A549 (cell line): ENCODE measurements at regions of chr3 and their contacts with region 1.

Region 1: DNA sequence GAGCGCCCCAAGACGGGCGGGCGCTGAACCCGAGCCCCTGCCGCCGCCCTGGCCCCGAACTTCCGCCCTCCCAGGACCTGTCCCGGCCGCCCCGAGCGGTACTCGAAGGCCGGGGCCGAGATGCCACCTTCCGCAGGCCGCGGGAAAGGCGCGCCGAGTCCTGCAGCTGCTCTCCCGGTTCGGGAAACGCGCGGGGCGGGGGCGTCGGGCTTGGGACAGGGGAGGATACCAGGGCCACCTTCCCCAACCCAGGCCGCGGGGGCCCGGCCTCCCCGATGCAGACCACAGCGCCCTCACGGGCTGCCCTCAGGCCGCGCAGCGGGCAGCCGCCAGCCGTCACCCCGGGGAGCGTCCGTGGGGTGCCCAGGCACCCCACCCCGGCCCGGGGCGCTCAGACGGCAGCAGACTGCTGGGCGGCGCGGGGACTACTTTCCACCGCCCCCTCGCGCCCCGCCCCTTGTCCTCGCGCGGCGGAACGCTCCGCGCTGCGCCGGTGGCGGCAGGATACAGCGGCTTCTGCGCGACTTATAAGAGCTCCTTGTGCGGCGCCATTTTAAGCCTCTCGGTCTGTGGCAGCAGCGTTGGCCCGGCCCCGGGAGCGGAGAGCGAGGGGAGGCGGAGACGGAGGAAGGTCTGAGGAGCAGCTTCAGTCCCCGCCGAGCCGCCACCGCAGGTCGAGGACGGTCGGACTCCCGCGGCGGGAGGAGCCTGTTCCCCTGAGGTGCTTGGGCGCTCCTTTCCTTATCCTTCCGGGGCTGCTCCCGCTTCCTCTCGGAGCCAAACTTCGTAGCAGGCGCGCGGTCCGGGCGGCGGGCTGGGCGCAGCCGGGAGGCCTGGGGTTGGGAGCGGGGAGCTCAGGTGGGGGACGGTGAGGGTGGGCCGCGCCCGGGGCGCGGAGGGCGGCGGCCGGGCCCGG is at the start of gene CTNNB1:
- DNase-seq: peak; percentile 33 to 94
- ATAC-seq: peak; percentile 81 to 89
- H3K4me3 ChIP-seq: peak within 1 kb of the TSS; percentile 95
- H3K27ac ChIP-seq: peak within 1 kb of the TSS; percentile 98 to 100
- H3K4me1 ChIP-seq: peaks cover 26% of the 10 kb centered on the region
- CTCF ChIP-seq: no peak
- EP300 ChIP-seq: peak in 1 of 2 experiments; percentile 6; a peak in 1 of 5 replicates
- POLR2A ChIP-seq: peak; percentile 84
- RAD21 ChIP-seq: peak; percentile 1 to 12; a peak in 2 of 5 replicates
- polyA plus RNA-seq, gene CTNNB1: 242 and 389 TPM in 2 replicates

Region 2: DNA sequence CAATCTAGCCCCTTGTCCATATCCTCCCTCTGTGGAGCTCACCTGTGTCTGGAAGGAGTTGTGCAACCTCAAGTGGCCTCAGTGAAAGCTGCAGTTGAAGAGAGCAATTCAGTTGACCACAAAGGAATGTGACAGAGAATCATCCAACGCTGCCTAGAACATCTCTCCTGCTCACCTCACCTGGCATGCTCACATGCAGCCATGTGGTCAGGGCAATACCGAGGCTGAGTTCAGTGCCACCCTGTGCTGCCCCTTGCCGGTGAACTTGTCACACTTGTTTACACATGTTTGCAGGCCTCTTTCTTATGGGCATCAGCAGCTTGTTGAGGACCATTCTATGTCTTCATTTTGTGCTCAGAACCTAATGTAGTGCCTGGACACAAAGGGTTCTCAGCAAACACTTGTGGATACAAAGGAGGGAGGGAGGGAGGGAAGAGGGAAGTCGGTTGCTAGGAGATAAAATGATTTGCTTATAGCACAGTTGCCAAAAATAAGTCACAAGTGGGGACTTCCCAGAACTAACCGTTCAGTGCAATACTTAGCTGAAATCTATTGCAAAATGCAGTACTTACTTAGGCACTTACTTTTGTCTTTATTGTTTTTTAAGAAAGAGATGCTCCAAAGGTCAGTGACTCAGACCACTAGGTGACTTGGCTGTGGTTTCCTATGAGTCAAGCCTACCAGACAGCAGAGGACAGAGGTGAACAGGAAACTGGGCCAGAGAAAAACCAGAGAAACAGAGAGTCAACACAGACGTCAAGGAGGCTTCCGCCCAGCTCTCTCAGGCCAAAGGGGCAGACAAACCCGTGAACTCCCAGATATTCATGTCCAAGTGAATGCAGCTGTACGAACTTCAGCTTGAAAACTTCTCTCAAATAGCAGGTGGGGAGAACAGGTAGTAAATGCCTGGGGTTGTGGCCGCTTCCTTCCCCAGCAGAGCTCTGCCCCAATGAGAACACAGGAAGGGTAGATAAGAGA is 227.7 kb before region 1 on chr3:
- CTCF ChIA-PET with region 1: no interaction called
- POLR2A ChIA-PET with region 1: interaction called, 35 read pairs
- DNase-seq: peak; percentile 62 to 94
- ATAC-seq: peak; percentile 98
- H3K4me3 ChIP-seq: no peak overlapping the region
- H3K27ac ChIP-seq: peak overlapping the region; percentile 78 to 91
- H3K4me1 ChIP-seq: peaks cover 20% of the 10 kb centered on the region
- CTCF ChIP-seq: no peak
- EP300 ChIP-seq: peak; percentile 68 to 82; a peak in 3 of 5 replicates
- POLR2A ChIP-seq: no peak
- RAD21 ChIP-seq: peak; percentile 32 to 54; a peak in 4 of 5 replicates

Region 3: GRCh38 chr3:41064070-41064469 is 135.1 kb before region 1 on chr3:
- CTCF ChIA-PET with region 1: no interaction called
- POLR2A ChIA-PET with region 1: no interaction called
- DNase-seq: no peak
- ATAC-seq: no peak
- H3K4me3 ChIP-seq: no peak overlapping the region
- H3K27ac ChIP-seq: no peak overlapping the region
- H3K4me1 ChIP-seq: no peaks in the 10 kb centered on the region
- CTCF ChIP-seq: no peak
- EP300 ChIP-seq: no peak
- POLR2A ChIP-seq: no peak
- RAD21 ChIP-seq: no peak

Region 4: GRCh38 chr3:41111016-41111415 is 88.2 kb before region 1 on chr3:
- CTCF ChIA-PET with region 1: no interaction called
- POLR2A ChIA-PET with region 1: no interaction called
- DNase-seq: no peak
- ATAC-seq: no peak
- H3K4me3 ChIP-seq: no peak overlapping the region
- H3K27ac ChIP-seq: no peak overlapping the region
- H3K4me1 ChIP-seq: no peaks in the 10 kb centered on the region
- CTCF ChIP-seq: no peak
- EP300 ChIP-seq: no peak
- POLR2A ChIP-seq: no peak
- RAD21 ChIP-seq: no peak

Region 5: GRCh38 chr3:41182525-41183059 is 16.6 kb before region 1 on chr3:
- CTCF ChIA-PET with region 1: no interaction called
- POLR2A ChIA-PET with region 1: no interaction called
- DNase-seq: no peak
- ATAC-seq: no peak
- H3K4me3 ChIP-seq: no peak overlapping the region
- H3K27ac ChIP-seq: no peak overlapping the region
- H3K4me1 ChIP-seq: no peaks in the 10 kb centered on the region
- CTCF ChIP-seq: no peak
- EP300 ChIP-seq: no peak
- POLR2A ChIP-seq: no peak
- RAD21 ChIP-seq: no peak

Region 6: GRCh38 chr3:41216993-41217392 is 17.8 kb after region 1 on chr3:
- CTCF ChIA-PET with region 1: interaction called, 4 read pairs
- POLR2A ChIA-PET with region 1: interaction called, 19 read pairs
- DNase-seq: no peak
- ATAC-seq: peak; percentile 13 to 51; a peak in 2 of 6 replicates
- H3K4me3 ChIP-seq: no peak overlapping the region
- H3K27ac ChIP-seq: no peak overlapping the region
- H3K4me1 ChIP-seq: peaks cover 75% of the 10 kb centered on the region
- CTCF ChIP-seq: no peak
- EP300 ChIP-seq: no peak
- POLR2A ChIP-seq: no peak
- RAD21 ChIP-seq: no peak